ENCODE measurements at regions of chr3 and their contacts with region 1.

Region 1: DNA sequence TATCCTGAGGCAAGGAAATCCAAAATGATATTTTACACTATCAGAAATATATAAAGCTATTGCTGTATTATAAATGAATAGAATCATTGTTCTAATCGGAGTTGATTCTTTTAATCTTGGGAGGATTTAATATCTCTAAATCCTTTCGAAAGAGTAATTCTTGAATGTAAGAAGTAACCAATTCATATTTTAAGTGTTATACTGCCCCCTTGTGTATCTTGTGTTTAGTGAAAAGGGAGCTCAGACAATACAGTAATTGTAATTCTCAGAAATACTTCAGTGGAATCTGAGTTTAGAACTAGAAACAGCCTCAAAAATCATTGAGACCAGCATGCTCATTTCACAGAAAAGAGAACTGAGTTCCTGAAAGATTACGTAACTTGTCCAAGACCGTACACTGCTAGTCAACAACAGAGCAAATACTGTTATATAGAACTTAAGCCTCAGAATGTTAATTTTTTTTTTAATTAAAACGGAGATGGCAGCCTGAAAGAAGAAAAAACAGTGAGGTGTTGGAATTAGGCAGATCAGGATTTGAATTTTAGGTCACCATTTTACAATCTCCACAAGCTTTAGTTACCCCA is 42.9 kb downstream of the PLCH1 start:
- DNase-seq: peak; percentile 8
- H3K4me3 ChIP-seq: no peak overlapping the region
- H3K27ac ChIP-seq: no peak overlapping the region
- H3K4me1 ChIP-seq: no peaks in the 10 kb centered on the region
- H3K27me3 ChIP-seq: no peaks in the 10 kb centered on the region
- CTCF ChIP-seq: peak in 3 of 4 experiments; percentile 77 to 81 (median 79)
- POLR2A ChIP-seq: no peak

Region 2: DNA sequence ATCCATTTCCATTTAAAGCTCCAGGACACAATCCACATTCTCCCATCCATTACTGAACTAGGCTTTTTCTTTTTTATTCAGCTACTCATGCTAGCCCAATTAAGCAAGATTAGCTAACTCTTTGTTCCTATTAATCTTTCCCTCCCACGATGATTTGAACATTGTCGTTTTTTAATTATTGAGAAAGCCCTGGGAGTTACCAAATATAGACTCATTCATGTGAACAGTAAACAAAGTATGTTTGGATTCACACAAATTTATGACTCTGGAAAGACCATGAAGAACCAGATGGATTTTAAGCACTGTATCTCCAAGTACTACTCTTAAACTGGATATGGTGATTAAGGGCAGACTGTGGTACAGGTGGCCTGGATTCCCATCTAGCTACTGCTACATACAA is 490.7 kb before region 1 on chr3:
- intact Hi-C with region 1: no loop called
- DNase-seq: no peak
- H3K4me3 ChIP-seq: no peak overlapping the region
- H3K27ac ChIP-seq: peak overlapping the region; percentile 50 to 68
- H3K4me1 ChIP-seq: no peaks in the 10 kb centered on the region
- H3K27me3 ChIP-seq: no peaks in the 10 kb centered on the region
- CTCF ChIP-seq: no peak
- POLR2A ChIP-seq: no peak

Region 3: GRCh38 chr3:155352900-155353490 is 349.0 kb before region 1 on chr3:
- intact Hi-C with region 1: loop called (anchors 2 kb)
- DNase-seq: no peak
- H3K4me3 ChIP-seq: no peak overlapping the region
- H3K27ac ChIP-seq: no peak overlapping the region
- H3K4me1 ChIP-seq: no peaks in the 10 kb centered on the region
- H3K27me3 ChIP-seq: no peaks in the 10 kb centered on the region
- CTCF ChIP-seq: peak; percentile 11 to 67 (median 50)
- POLR2A ChIP-seq: no peak

Region 4: DNA sequence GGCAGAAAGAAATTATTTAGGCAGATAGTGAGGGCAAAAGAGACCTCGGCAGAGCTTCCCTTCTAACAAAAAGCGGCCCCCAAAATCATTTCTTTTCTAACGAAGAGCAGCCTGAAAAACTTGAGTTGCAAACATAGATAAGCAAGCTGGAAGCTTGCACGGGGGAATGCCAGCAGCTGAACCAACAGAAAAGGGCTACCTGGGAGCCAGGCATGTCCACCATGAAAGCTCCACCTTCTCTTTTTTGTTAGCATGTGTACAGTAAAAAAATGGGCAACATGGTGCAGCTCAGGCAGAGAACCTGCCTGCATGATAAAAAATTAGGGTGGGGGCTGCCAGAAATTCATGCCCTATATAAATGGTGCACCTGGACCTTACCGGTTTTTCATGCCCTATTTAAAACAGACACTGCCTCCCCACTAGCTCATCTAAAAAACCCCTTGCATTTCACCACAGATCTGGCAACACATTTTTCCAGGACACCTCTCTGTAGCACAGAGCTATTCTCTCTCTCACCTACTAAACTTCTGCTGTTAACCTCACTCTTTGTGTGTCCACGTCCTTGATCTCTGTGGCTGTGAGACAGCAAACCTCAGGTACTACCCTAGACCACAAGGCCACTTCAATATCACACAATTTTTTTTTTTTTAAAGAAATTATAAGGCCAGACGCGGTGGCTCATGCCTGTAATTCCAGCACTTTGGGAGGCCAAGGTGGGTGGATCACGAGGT is 133.5 kb after region 1 on chr3:
- intact Hi-C with region 1: no loop called
- DNase-seq: no peak
- H3K4me3 ChIP-seq: no peak overlapping the region
- H3K27ac ChIP-seq: no peak overlapping the region
- H3K4me1 ChIP-seq: no peaks in the 10 kb centered on the region
- H3K27me3 ChIP-seq: no peaks in the 10 kb centered on the region
- CTCF ChIP-seq: no peak
- POLR2A ChIP-seq: no peak

Measured in prostate gland (tissue), 2 donors.